ENCODE measurements at regions of chr17 and their contacts with region 1.

Region 1: GRCh38 chr17:27489045-27489715 is 32.9 kb downstream of the KSR1 start:
- DNase-seq: peak; percentile 94
- ATAC-seq: peak; percentile 89

Region 2: GRCh38 chr17:27593232-27593856 is 104.2 kb after region 1 on chr17:
- intact Hi-C with region 1: loop called (anchors 5 kb)
- DNase-seq: no peak
- ATAC-seq: no peak